ENCODE measurements at regions of chr6 and their contacts with region 1.

Region 1: GRCh38 chr6:157274471-157275226 is 48.7 kb downstream of the TMEM242 start:
- H3K4me3 ChIP-seq: peak overlapping the region; percentile 66
- H3K27ac ChIP-seq: peak overlapping the region; percentile 63
- H3K4me1 ChIP-seq: peaks cover 6% of the 10 kb centered on the region; the same call in 1 of the 2 replicates
- CTCF ChIP-seq: peak; percentile 51; the same call in 1 of the 2 replicates

Region 2: GRCh38 chr6:157287943-157288342 is 13.3 kb after region 1 on chr6:
- CTCF ChIA-PET with region 1: interaction called, 10 read pairs
- POLR2A ChIA-PET with region 1: no interaction called
- H3K4me3 ChIP-seq: no peak overlapping the region
- H3K27ac ChIP-seq: no peak overlapping the region
- H3K4me1 ChIP-seq: no peaks in the 10 kb centered on the region
- CTCF ChIP-seq: no peak

Measured in HEK293 (cell line).